CD4-positive, alpha-beta memory T cell (primary cell): ENCODE measurements at regions of chr12 and their contacts with region 1.

Region 1: DNA sequence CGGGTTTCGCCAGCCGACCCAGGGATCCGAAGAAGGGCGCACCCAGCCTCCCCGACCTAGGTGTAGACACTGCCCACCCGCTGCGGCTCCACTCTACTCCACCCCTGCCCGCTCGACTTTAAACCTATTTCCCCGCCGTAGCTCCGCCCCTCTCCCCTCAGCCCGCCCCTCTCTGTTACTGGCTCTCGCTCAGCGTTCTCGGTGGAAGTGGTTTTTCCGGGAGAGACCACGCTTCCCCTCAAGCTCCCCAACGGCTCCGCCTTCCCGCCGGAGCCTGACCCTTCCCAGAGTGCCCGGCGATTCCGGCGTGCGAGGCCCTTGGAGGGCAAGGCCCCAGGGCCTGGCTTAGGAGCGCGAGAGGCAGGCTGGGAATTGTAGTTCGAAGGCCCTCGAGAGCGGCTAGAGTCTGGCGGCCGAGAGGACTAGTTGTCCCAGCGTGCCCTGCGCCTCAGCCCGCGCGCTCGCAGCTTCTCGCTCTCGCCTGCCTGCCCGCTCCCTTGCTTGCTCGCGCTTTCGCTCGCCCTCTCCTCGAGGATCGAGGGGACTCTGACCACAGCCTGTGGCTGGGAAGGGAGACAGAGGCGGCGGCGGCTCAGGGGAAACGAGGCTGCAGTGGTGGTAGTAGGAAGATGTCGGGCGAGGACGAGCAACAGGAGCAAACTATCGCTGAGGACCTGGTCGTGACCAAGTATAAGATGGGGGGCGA is at the start of gene PA2G4:
- DNase-seq: peak; percentile 95 to 97 (median 96)
- H3K4me3 ChIP-seq: peak within 1 kb of the TSS; percentile 62 to 90
- H3K4me3 Mint-ChIP-seq: peak within 1 kb of the TSS; percentile 89 to 99 (median 96)
- H3K27ac ChIP-seq: peak within 1 kb of the TSS; percentile 82
- H3K27ac Mint-ChIP-seq: peak within 1 kb of the TSS; percentile 97 to 100 (median 98)
- H3K4me1 ChIP-seq: peaks cover 49% of the 10 kb centered on the region
- H3K4me1 Mint-ChIP-seq: peaks cover 34 to 62% (median 47%) of the 10 kb centered on the region in 4 donors
- H3K27me3 ChIP-seq: no peaks in the 10 kb centered on the region
- H3K27me3 Mint-ChIP-seq: no peaks in the 10 kb centered on the region
- total RNA-seq, gene PA2G4: 106 to 108 TPM

Region 2: DNA sequence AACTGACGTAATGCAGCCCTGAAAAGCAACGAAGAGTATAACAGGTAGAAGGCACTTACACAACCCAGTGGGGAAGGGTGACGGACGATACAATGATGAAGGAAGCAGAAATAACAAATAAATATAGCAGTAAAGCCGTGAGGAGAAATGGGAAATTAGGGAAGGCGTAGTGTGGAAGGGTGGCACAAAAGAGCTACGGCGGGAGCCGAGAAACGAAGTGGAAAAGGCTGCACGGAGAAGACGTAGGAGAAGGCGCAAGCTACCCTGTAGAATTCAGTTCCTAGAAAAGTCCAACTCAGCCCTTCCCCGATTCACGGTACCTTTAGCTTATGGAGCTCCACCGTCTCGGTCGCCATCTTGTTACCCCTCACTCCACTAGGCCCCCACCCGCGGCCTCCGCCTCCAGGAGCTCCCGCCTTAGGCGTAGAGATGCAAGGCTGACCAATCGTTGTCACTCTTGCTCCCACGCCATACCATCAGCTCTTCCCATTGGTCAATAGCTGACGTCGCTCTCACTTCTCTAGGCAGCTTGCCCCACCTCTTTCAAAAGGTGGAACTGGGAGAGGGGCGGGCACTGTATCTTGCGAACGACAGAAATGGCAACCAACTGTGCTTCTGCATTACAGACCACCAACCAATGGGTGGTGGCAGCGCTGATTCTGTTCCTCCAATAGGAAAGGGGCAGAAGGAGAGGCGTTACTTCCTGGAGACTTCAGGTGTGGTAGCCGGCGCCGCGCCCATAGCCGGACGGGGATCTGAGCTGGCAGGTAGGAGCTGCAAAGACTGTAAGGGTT is 286.7 kb before region 1 on chr12 and contains the starts of genes ORMDL2 and SARNP:
- CTCF ChIA-PET with region 1: no interaction called
- POLR2A ChIA-PET with region 1: interaction called, 11 read pairs
- intact Hi-C with region 1: loop called (anchors 5 kb)
- DNase-seq: peak; percentile 95 to 100 (median 99)
- H3K4me3 ChIP-seq: peak within 1 kb of the TSS; percentile 76 to 96
- H3K4me3 Mint-ChIP-seq: no peak within 1 kb of the TSS
- H3K27ac ChIP-seq: peak within 1 kb of the TSS; percentile 88
- H3K27ac Mint-ChIP-seq: no peak within 1 kb of the TSS
- H3K4me1 ChIP-seq: peaks cover 51% of the 10 kb centered on the region
- H3K4me1 Mint-ChIP-seq: peaks cover 23 to 36% (median 25%) of the 10 kb centered on the region in 4 donors
- H3K27me3 ChIP-seq: no peaks in the 10 kb centered on the region
- H3K27me3 Mint-ChIP-seq: no peaks in the 10 kb centered on the region
- total RNA-seq, gene ORMDL2: 42.6 to 44.4 TPM
- total RNA-seq, gene SARNP: 47.7 to 49.4 TPM

Region 3: GRCh38 chr12:55973598-55974307 is 130.5 kb before region 1 on chr12 and contains the start of gene RAB5B:
- CTCF ChIA-PET with region 1: interaction called, 4 read pairs
- POLR2A ChIA-PET with region 1: interaction called, 22 read pairs
- intact Hi-C with region 1: loop called (anchors 1 kb)
- DNase-seq: peak; percentile 95 to 100 (median 99)
- H3K4me3 ChIP-seq: peak within 1 kb of the TSS; percentile 60 to 73
- H3K4me3 Mint-ChIP-seq: no peak within 1 kb of the TSS
- H3K27ac ChIP-seq: peak within 1 kb of the TSS; percentile 87
- H3K27ac Mint-ChIP-seq: no peak within 1 kb of the TSS
- H3K4me1 ChIP-seq: peaks cover 37% of the 10 kb centered on the region
- H3K4me1 Mint-ChIP-seq: peaks cover 14 to 30% (median 23%) of the 10 kb centered on the region in 4 donors
- H3K27me3 ChIP-seq: no peaks in the 10 kb centered on the region
- H3K27me3 Mint-ChIP-seq: no peaks in the 10 kb centered on the region
- total RNA-seq, gene RAB5B: 106 to 112 TPM

Region 4: DNA sequence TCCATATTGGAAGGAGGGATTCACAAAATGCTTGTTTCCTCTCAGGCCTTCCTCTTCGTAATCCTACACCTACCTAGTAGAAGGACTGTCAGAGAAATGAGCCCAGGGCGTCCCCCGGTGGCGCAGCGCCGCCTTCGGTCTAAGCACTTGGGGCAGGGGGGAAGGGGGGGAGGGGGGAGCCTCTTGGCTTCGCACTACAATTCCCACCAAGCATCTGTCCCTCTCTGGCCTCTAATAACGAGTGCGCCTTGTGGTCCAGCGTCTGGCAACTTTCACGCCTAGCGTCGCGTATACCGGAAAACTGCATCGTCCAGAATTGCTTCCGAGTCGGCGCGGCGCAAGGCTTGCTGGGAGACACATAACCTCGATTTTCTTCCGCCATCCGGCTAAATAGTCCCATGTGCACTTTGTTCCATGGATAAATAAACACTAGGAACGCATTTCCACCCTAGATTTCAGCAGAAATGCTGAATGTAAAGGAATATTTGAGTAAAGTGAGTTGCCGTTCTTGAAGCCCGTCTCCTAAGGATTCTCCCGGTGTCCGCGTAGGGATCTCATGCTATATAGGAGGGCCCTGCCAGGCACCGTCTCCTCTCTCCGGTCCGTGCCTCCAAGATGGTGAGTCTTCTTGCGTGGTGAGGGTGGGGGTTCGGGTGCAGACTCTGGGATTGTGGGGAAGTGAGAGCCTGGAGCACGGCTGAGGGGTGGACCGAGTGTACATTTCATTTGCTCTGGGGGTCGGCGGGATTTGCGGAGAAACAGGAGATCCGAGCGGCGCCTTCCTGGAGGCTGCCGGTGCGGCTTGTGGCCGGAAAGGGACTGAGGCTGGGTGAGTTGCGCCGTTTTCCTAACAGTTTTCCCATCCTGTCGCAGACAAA is 62.5 kb before region 1 on chr12 and contains the start of gene RPS26:
- CTCF ChIA-PET with region 1: interaction called, 37 read pairs
- POLR2A ChIA-PET with region 1: interaction called, 51 read pairs
- intact Hi-C with region 1: loop called (anchors 1 kb)
- DNase-seq: peak; percentile 95 to 98 (median 96)
- H3K4me3 ChIP-seq: peak within 1 kb of the TSS; percentile 94 to 97
- H3K4me3 Mint-ChIP-seq: peak within 1 kb of the TSS; percentile 98 to 100 (median 99)
- H3K27ac ChIP-seq: peak within 1 kb of the TSS; percentile 87
- H3K27ac Mint-ChIP-seq: peak within 1 kb of the TSS; percentile 96 to 100 (median 99)
- H3K4me1 ChIP-seq: peaks cover 23% of the 10 kb centered on the region
- H3K4me1 Mint-ChIP-seq: peaks cover 15 to 45% (median 23%) of the 10 kb centered on the region in 4 donors
- H3K27me3 ChIP-seq: no peaks in the 10 kb centered on the region
- H3K27me3 Mint-ChIP-seq: no peaks in the 10 kb centered on the region
- total RNA-seq, gene RPS26: 55.6 to 55.8 TPM

Region 5: DNA sequence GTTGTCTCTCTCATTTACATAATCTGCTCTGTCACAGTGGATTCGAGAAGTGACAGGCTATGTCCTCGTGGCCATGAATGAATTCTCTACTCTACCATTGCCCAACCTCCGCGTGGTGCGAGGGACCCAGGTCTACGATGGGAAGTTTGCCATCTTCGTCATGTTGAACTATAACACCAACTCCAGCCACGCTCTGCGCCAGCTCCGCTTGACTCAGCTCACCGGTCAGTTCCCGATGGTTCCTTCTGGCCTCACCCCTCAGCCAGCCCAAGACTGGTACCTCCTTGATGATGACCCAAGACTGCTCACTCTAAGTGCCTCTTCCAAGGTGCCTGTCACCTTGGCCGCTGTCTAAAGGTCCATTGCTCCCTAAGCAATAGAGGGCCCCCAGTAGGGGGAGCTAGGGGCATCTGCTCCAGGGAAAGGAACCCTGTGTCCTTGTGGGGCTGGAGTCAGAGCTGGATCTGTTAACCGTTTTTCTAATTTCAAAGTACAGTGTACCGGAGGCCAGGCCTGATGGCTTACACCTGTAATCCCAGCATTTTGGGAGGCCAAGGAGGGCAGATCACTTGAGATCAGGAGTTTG is 19.2 kb before region 1 on chr12:
- CTCF ChIA-PET with region 1: interaction called, 23 read pairs
- POLR2A ChIA-PET with region 1: interaction called, 70 read pairs
- intact Hi-C with region 1: no loop called
- DNase-seq: no peak
- H3K4me3 ChIP-seq: no peak overlapping the region
- H3K4me3 Mint-ChIP-seq: no peak overlapping the region
- H3K27ac ChIP-seq: no peak overlapping the region
- H3K27ac Mint-ChIP-seq: peak overlapping the region in 1 of 7 donors; percentile 76
- H3K4me1 ChIP-seq: peaks cover 10% of the 10 kb centered on the region
- H3K4me1 Mint-ChIP-seq: peaks cover 0 to 11% (median 4%) of the 10 kb centered on the region in 4 donors
- H3K27me3 ChIP-seq: peaks cover 6% of the 10 kb centered on the region
- H3K27me3 Mint-ChIP-seq: peaks cover 0 to 3% of the 10 kb centered on the region in 2 donors

Region 6: GRCh38 chr12:56152318-56153033 is 48.2 kb after region 1 on chr12 and contains the start of gene MYL6B:
- CTCF ChIA-PET with region 1: no interaction called
- POLR2A ChIA-PET with region 1: interaction called, 5 read pairs
- intact Hi-C with region 1: loop called (anchors 1 kb)
- DNase-seq: peak; percentile 87 to 94 (median 88)
- H3K4me3 ChIP-seq: peak within 1 kb of the TSS; percentile 66 to 91
- H3K4me3 Mint-ChIP-seq: peak within 1 kb of the TSS; percentile 91 to 96 (median 94)
- H3K27ac ChIP-seq: peak within 1 kb of the TSS; percentile 84
- H3K27ac Mint-ChIP-seq: peak within 1 kb of the TSS; percentile 93 to 99 (median 97)
- H3K4me1 ChIP-seq: peaks cover 35% of the 10 kb centered on the region
- H3K4me1 Mint-ChIP-seq: peaks cover 16 to 49% (median 28%) of the 10 kb centered on the region in 4 donors
- H3K27me3 ChIP-seq: no peaks in the 10 kb centered on the region
- H3K27me3 Mint-ChIP-seq: no peaks in the 10 kb centered on the region
- total RNA-seq, gene MYL6B: 2.6 to 3.4 TPM

Region 7: GRCh38 chr12:56359851-56360767 is 255.8 kb after region 1 on chr12 and contains the start of gene STAT2:
- CTCF ChIA-PET with region 1: no interaction called
- POLR2A ChIA-PET with region 1: interaction called, 12 read pairs
- intact Hi-C with region 1: no loop called
- DNase-seq: peak; percentile 99 to 100 (median 100)
- H3K4me3 ChIP-seq: peak within 1 kb of the TSS; percentile 78 to 97
- H3K4me3 Mint-ChIP-seq: peak within 1 kb of the TSS; percentile 92 to 98 (median 96)
- H3K27ac ChIP-seq: peak within 1 kb of the TSS; percentile 84
- H3K27ac Mint-ChIP-seq: peak within 1 kb of the TSS; percentile 89 to 98 (median 96)
- H3K4me1 ChIP-seq: peaks cover 29% of the 10 kb centered on the region
- H3K4me1 Mint-ChIP-seq: peaks cover 16 to 30% (median 21%) of the 10 kb centered on the region in 4 donors
- H3K27me3 ChIP-seq: no peaks in the 10 kb centered on the region
- H3K27me3 Mint-ChIP-seq: no peaks in the 10 kb centered on the region
- total RNA-seq, gene STAT2: 192 to 193 TPM